CD4-positive, alpha-beta T cell (primary cell): ENCODE measurements at regions of chr1 and their contacts with region 1.

Region 1: GRCh38 chr1:19179597-19180264 is 30.3 kb downstream of the UBR4 start:
- DNase-seq: peak in 9 of 14 experiments; percentile 7 to 66 (median 28)
- ATAC-seq: peak; percentile 90
- H3K4me3 ChIP-seq: no peak overlapping the region
- H3K4me3 Mint-ChIP-seq: peak overlapping the region; percentile 38
- H3K27ac ChIP-seq: peak overlapping the region; percentile 7 to 35
- H3K27ac Mint-ChIP-seq: peak overlapping the region; percentile 61
- H3K4me1 ChIP-seq: peaks cover 15% of the 10 kb centered on the region
- H3K4me1 Mint-ChIP-seq: peaks cover 36% of the 10 kb centered on the region
- H3K27me3 ChIP-seq: no peaks in the 10 kb centered on the region
- H3K27me3 Mint-ChIP-seq: no peaks in the 10 kb centered on the region
- CTCF ChIP-seq: peak; percentile 30

Region 2: GRCh38 chr1:19240673-19241538 is 61.2 kb after region 1 on chr1:
- CTCF ChIA-PET with region 1: interaction called, 10 read pairs
- POLR2A ChIA-PET with region 1: no interaction called
- intact Hi-C with region 1: loop called (anchors 1 to 2 kb)
- DNase-seq: peak; percentile 48 to 81 (median 64)
- ATAC-seq: peak; percentile 100
- H3K4me3 ChIP-seq: no peak overlapping the region
- H3K4me3 Mint-ChIP-seq: no peak overlapping the region
- H3K27ac ChIP-seq: no peak overlapping the region
- H3K27ac Mint-ChIP-seq: no peak overlapping the region
- H3K4me1 ChIP-seq: no peaks in the 10 kb centered on the region
- H3K4me1 Mint-ChIP-seq: no peaks in the 10 kb centered on the region
- H3K27me3 ChIP-seq: no peaks in the 10 kb centered on the region
- H3K27me3 Mint-ChIP-seq: no peaks in the 10 kb centered on the region
- CTCF ChIP-seq: peak; percentile 97